Left ventricle myocardium inferior (tissue), 1 donor: ENCODE measurements at regions of chr12 and their contacts with region 1.

Region 1: DNA sequence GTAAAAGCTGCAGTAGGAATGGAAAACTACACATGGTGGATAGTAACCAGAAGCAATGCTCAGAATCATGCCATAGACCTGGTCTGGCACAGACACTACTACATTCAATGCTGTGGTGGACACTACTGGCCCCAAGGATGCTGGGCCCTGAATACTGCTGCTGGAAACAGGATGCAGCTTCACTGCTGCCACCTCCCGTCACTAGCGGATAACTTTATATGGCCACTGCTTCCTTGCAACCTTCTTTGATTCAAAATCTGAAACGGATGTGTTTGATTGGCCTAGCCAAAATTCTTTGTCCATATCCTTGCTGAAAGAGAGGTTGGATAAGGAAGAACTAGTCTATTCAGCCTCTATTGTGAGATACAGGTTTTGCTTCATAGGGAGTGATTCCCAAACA is 30.7 kb downstream of the ADCY6 start:
- DNase-seq: no peak
- H3K4me3 ChIP-seq: no peak overlapping the region
- H3K27ac ChIP-seq: no peak overlapping the region
- H3K4me1 ChIP-seq: no peaks in the 10 kb centered on the region
- H3K27me3 ChIP-seq: no peaks in the 10 kb centered on the region
- CTCF ChIP-seq: no peak

Region 2: DNA sequence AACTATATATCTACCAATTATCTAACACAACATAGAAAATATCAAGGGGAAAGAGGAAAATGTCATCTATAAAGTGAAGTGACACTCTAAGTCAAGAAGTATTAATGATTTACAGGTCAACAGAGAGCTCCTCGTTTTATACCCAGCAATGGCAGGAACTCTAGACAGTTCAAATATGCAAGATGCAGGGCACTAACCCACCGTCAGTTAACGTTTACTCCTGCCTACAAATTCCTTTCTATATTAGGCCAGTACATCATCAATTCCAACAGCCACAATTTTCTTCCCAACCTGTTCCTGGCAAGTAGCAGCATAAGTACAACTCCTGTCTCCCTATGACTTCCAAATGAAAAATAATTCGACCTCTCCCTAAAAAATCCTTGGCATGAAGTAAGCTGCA is 67.2 kb before region 1 on chr12:
- intact Hi-C with region 1: no loop called
- DNase-seq: no peak
- H3K4me3 ChIP-seq: no peak overlapping the region
- H3K27ac ChIP-seq: peak overlapping the region; percentile 20
- H3K4me1 ChIP-seq: peaks cover 26% of the 10 kb centered on the region
- H3K27me3 ChIP-seq: no peaks in the 10 kb centered on the region
- CTCF ChIP-seq: no peak

Region 3: GRCh38 chr12:48795480-48796455 is 37.5 kb after region 1 on chr12:
- intact Hi-C with region 1: loop called (anchors 2 kb)
- DNase-seq: no peak
- H3K4me3 ChIP-seq: no peak overlapping the region
- H3K27ac ChIP-seq: no peak overlapping the region
- H3K4me1 ChIP-seq: peaks cover 7% of the 10 kb centered on the region
- H3K27me3 ChIP-seq: peaks cover 17% of the 10 kb centered on the region
- CTCF ChIP-seq: peak; percentile 96

Region 4: DNA sequence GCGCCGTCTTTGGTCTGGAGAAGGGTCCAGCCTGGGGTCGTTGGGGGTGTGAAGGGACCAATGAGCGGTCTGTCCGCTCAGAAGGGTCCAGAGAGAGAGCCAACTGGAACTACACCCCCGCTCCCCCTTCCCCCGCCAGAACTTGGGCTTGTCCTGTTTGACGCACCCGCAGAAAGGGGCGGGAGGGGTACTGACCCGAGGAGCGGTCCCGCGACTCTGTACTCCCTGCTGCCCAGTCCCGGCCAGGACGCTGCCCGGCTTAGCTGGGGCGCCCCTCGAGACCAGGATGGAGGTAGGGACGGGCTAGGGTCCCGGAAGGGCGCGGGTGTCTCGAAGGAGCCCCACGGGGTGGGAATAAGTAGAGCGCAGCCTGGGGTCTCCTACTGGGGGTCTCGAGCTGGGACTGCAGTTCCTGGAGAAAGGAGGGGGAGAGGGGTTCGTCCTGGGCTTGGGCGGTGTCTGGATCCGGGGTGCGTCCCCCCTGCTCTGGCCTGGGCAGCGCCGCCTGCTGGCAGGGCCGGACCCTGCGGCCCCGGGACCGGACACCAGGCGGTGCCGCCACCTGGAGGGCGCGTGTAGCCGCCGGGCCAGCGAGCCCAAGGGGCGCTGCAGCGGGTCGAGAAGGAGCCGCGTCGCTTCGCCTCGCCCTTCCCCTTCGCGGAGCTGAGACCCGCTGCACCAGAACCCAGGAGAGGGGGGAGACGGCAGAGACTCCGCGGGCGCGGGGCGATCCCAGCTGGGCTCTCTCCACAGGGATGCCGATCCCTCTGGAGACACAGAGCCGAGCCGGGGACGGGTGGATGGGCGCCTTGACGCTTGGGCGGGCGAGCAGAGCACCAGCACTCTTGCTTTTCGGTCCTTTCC is 56.3 kb after region 1 on chr12:
- intact Hi-C with region 1: no loop called
- DNase-seq: peak; percentile 84
- H3K4me3 ChIP-seq: peak overlapping the region; percentile 95
- H3K27ac ChIP-seq: peak overlapping the region; percentile 94
- H3K4me1 ChIP-seq: peaks cover 51% of the 10 kb centered on the region
- H3K27me3 ChIP-seq: no peaks in the 10 kb centered on the region
- CTCF ChIP-seq: peak; percentile 100

Region 5: DNA sequence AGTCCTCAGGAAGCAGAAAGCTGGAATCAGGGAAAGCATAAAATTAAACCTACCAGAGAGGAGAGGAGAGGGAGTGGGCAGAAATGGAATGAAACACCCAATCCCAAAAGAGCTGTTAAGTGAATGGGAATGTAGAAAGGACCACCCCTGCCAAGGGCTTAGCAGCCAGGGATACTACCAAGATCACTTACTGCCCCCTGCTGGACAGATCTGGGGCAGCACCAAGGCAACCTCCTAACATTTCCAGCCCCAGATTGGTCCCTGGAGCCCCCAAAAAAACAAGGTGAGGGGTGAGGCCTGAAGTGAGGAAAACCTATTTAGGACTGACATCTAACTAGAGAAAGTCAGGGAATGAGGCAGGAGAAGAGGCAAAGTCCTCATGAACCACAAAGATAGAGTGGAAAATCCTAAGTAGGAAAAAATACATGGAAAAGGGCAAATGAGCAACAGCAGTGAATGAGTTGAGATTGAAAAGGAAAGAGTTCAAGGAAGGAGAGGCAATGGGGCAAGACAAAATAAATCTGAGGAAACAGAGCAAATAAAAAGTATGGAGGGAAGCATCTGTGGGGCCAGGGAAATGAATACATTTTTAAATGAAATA is 178.3 kb after region 1 on chr12:
- intact Hi-C with region 1: no loop called
- DNase-seq: peak; percentile 62
- H3K4me3 ChIP-seq: no peak overlapping the region
- H3K27ac ChIP-seq: no peak overlapping the region
- H3K4me1 ChIP-seq: peaks cover 8% of the 10 kb centered on the region
- H3K27me3 ChIP-seq: no peaks in the 10 kb centered on the region
- CTCF ChIP-seq: peak; percentile 92